Heart left ventricle (tissue), 16 donors: ENCODE measurements at regions of chr5 and their contacts with region 1.

Region 1: DNA sequence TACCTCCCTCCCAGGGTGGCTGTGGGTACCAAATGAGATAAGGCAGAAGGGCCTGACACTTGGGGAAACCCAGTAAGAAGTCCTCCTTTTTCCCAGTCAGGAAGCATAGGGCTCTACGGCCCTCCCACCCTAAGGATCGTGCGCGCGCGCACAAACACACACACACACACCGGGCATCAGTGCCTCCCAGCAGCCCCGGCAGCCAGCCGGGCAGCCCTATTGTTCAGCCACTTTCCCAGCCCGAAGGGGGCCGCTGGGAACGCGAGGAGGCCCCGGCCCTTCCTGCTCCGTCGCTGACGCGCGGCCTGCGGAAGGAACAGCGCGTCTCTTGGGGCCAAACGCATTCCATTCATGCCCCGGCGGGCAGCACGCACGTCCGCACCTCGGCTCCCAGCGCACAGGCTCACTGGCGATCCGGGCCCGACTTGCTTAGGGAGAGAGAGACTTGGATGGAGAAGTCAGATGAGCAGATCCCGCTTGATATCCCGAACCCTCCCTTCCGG is 22.6 kb downstream of the DUSP1 start:
- DNase-seq: peak; percentile 90 to 96 (median 93)
- ATAC-seq: peak; percentile 72 to 91 (median 85)
- H3K4me3 ChIP-seq: peak overlapping the region in 8 of 12 donors; percentile 6 to 28 (median 14)
- H3K27ac ChIP-seq: peak overlapping the region; percentile 76 to 97 (median 92)
- H3K4me1 ChIP-seq: peaks cover 7 to 84% (median 44%) of the 10 kb centered on the region in 12 donors
- H3K27me3 ChIP-seq: no peaks in the 10 kb centered on the region
- CTCF ChIP-seq: peak in 1 of 12 donors; percentile 10
- POLR2A ChIP-seq: peak in 1 of 2 donors; percentile 61

Region 2: DNA sequence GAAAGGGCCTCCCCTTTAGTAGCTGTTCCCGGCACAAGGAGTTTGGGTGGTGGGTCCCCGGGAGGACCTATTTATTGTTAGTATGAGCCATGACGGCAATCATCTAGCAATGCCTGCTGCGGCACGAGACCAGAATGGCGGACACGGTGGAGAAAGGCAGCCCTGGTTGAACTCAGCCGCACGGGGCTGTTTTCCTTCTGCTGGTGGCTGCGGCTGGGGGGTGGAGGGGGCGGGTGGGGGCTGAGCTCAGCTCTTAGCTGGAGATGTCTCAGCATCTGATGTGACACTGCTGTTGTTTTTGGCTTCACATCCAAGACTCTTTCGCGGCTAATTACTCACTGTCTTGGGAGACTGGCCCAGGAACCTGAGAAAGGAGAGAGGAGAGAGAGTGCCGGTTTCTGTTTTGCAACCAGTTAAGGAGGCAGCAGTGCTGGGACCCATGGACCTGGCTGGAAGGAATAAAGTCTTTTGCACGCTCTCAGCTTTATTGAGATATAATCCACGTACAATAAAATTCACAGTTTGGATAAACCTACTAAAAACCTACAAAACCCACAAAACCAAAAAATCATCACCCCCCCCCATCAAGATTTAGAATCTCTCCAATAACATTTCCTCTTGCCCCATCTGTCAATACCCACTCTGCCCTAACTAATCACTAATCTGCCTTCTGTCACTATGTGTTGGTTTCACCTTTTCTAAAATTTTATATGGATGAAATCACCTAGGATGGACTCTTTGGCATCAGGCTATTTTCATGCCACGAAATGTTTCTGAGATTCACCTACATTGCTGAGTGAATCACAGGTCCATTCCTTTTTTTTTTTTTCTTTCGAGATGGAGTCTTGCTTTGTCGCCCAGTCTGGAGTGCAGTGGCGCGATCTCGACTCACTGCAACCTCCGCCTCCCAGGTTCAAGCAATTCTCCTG is 189.1 kb before region 1 on chr5:
- intact Hi-C with region 1: no loop called
- DNase-seq: peak; percentile 43 to 80 (median 66)
- ATAC-seq: peak; percentile 13 to 75 (median 63)
- H3K4me3 ChIP-seq: peak overlapping the region in 10 of 12 donors; percentile 5 to 50 (median 24)
- H3K27ac ChIP-seq: peak overlapping the region in 11 of 12 donors; percentile 68 to 90 (median 78)
- H3K4me1 ChIP-seq: peaks cover 10 to 46% (median 34%) of the 10 kb centered on the region in 12 donors
- H3K27me3 ChIP-seq: no peaks in the 10 kb centered on the region
- CTCF ChIP-seq: no peak
- POLR2A ChIP-seq: no peak

Region 3: DNA sequence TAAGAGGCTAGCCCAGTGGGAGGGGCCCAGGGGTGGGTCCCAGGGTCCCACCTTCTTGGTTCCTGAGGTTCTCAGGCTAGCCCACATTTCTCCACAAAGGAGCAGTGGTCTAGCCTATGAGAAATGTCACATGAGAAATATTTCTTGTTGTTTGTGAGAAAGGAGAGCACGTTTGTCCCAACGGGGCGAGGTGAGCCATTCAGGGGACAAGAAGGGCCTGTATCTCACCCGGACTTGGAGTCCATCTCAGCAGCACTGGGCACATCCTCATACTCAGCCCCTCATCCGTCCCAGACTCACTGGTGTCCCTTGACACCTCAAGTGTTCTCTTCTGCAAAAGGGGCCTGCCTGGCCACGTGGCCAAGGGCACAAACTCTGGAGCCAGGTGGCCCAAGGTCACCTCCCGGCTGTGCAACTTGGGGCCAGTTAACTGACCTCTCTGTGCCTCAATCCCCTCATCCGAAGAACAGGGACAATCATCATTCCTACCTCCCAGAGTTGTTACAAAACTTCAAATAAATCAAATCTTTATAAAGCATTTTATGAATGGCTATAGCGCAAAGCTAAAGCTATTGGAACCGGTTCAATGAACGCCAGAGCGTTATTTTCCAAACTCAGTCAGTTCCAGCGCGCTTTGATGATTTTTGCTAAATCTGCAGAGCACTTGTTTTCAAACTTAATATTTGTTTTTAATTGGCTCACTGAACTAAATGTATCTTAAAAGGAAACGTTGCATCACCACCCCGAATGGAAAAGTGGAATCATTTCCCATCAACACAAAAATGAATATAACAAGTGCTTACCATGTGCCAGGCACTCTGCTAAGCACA is 26.9 kb before region 1 on chr5:
- intact Hi-C with region 1: loop called in 4 of 10 experiments (anchors 1 to 2 kb)
- DNase-seq: peak in 2 of 5 donors; percentile 23 to 61
- ATAC-seq: peak in 3 of 4 donors; percentile 21 to 64 (median 30)
- H3K4me3 ChIP-seq: peak overlapping the region in 1 of 12 donors; percentile 12
- H3K27ac ChIP-seq: peak overlapping the region; percentile 19 to 74 (median 59)
- H3K4me1 ChIP-seq: peaks cover 0 to 40% (median 28%) of the 10 kb centered on the region in 12 donors
- H3K27me3 ChIP-seq: no peaks in the 10 kb centered on the region
- CTCF ChIP-seq: no peak
- POLR2A ChIP-seq: no peak

Region 4: DNA sequence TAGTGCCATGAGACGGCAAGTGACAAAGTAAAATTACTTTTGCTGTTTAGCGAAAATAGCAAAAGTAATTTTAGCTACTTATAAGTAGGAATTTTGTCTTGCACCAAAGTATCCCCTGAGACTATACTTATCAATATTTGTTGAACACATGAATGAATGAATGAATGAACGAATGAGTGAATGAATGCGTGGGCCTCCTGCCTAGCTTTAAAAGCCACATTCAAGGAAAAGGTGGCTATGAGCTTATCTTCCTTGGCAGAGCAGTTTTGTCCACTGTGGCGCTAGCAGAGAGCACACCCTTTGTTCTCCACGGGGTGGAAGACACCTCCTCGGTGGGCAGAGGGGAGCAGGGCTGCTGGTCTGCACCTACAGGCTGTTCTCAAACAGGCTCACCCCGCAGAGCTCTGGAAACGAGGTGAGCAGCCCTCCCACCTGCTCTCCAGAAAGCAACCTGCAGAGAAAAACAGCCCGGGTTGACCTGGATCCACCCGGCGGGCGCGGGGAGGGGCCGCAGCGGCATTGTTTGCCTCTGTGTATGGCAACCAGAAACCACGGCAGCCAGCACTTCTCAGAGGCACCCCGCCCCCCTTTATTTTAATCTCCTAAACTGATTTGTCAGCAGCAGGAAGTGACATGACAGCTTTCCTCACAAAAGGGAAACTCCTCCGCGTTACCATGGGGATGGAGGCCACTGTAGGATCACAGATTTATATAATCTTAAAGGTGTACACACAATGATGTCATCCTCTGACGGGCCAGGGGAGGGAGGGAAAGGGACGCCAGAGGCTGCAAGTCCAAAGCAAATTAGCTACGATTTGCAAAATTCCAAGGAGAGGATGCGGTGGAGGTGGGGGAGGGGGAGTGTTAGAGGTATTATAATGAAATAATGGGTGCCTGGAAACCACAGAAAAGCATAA is 16.7 kb after region 1 on chr5:
- intact Hi-C with region 1: loop called in 7 of 10 experiments (anchors 1 to 2 kb)
- DNase-seq: peak; percentile 94 to 98 (median 97)
- ATAC-seq: peak; percentile 69 to 81 (median 70)
- H3K4me3 ChIP-seq: peak overlapping the region in 11 of 12 donors; percentile 15 to 98 (median 90)
- H3K27ac ChIP-seq: peak overlapping the region; percentile 95 to 100 (median 100)
- H3K4me1 ChIP-seq: peaks cover 3 to 55% (median 27%) of the 10 kb centered on the region in 12 donors
- H3K27me3 ChIP-seq: no peaks in the 10 kb centered on the region
- CTCF ChIP-seq: no peak
- POLR2A ChIP-seq: peak in 1 of 2 donors; percentile 61